B cell (primary cell): ENCODE measurements at regions of chr5 and their contacts with region 1.

Region 1: DNA sequence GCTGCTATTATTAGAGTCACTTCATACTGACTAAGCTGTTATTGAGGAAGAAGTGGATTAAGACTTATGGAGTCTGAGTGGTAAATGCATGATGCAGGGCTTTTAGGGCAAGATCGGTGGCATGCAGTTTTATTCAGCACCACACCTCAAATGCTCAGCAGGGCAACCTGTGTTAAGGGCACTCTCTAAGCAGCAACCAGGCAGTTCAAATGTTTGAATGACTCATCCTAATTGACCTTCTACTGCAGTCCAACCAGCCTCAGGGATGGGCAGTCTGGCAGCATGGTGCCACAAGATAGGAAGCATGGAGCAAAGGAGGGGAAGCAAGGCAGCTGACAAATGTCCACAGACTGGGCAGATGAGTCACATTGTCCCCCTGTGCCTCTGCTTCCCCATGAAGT is 80.2 kb upstream of the MIER3 start:
- DNase-seq: no peak
- ATAC-seq: no peak
- H3K4me3 ChIP-seq: no peak overlapping the region
- H3K4me3 Mint-ChIP-seq: no peak overlapping the region
- H3K27ac ChIP-seq: no peak overlapping the region
- H3K27ac Mint-ChIP-seq: no peak overlapping the region
- H3K4me1 ChIP-seq: peaks cover 22 to 24% of the 10 kb centered on the region in 2 donors
- H3K4me1 Mint-ChIP-seq: peaks cover 23% of the 10 kb centered on the region
- H3K27me3 ChIP-seq: no peaks in the 10 kb centered on the region
- H3K27me3 Mint-ChIP-seq: peaks cover 4% of the 10 kb centered on the region
- CTCF ChIP-seq: no peak

Region 2: GRCh38 chr5:56995596-56995995 is 36.6 kb before region 1 on chr5:
- CTCF ChIA-PET with region 1: no interaction called
- POLR2A ChIA-PET with region 1: no interaction called
- intact Hi-C with region 1: loop called (anchors 5 kb)
- DNase-seq: no peak
- ATAC-seq: no peak
- H3K4me3 ChIP-seq: no peak overlapping the region
- H3K4me3 Mint-ChIP-seq: no peak overlapping the region
- H3K27ac ChIP-seq: no peak overlapping the region
- H3K27ac Mint-ChIP-seq: no peak overlapping the region
- H3K4me1 ChIP-seq: no peaks in the 10 kb centered on the region
- H3K4me1 Mint-ChIP-seq: no peaks in the 10 kb centered on the region
- H3K27me3 ChIP-seq: peaks cover 0 to 4% (median 0%) of the 10 kb centered on the region in 4 experiments
- H3K27me3 Mint-ChIP-seq: peaks cover 4% of the 10 kb centered on the region
- CTCF ChIP-seq: no peak

Region 3: GRCh38 chr5:58484505-58484904 is 1452.4 kb after region 1 on chr5:
- CTCF ChIA-PET with region 1: no interaction called
- POLR2A ChIA-PET with region 1: no interaction called
- intact Hi-C with region 1: loop called (anchors 10 kb)
- DNase-seq: no peak
- ATAC-seq: peak; percentile 69
- H3K4me3 ChIP-seq: peak overlapping the region in 1 of 5 experiments; percentile 9
- H3K4me3 Mint-ChIP-seq: peak overlapping the region; percentile 50
- H3K27ac ChIP-seq: peak overlapping the region in 1 of 2 donors; percentile 3
- H3K27ac Mint-ChIP-seq: peak overlapping the region; percentile 72
- H3K4me1 ChIP-seq: peaks cover 30 to 44% of the 10 kb centered on the region in 2 donors
- H3K4me1 Mint-ChIP-seq: peaks cover 15% of the 10 kb centered on the region
- H3K27me3 ChIP-seq: no peaks in the 10 kb centered on the region
- H3K27me3 Mint-ChIP-seq: no peaks in the 10 kb centered on the region
- CTCF ChIP-seq: no peak